Astrocyte of the cerebellum (primary cell): ENCODE measurements at regions of chr12 and their contacts with region 1.

Region 1: DNA sequence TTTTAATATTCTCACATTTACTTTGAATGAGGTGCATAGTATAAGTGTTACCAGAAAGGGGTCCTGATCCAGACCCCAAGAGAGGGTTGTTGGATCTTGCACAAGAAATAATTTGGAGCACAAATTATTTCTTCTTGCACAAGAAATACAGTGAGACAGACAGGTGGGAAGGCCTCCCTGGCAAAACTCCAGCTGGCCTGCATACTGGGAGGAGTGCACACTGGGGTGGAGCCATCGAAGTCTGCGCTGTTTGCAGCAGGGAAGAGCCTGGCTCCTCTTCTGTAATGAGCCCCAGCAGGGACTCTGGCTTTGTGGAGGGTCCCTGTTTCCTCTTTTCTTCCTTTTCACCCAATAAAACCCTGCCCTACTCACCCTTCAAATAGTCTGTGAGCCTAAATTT is 141.6 kb downstream of the GLT1D1 start:
- DNase-seq: no peak
- H3K4me3 ChIP-seq: no peak overlapping the region
- CTCF ChIP-seq: no peak

Region 2: DNA sequence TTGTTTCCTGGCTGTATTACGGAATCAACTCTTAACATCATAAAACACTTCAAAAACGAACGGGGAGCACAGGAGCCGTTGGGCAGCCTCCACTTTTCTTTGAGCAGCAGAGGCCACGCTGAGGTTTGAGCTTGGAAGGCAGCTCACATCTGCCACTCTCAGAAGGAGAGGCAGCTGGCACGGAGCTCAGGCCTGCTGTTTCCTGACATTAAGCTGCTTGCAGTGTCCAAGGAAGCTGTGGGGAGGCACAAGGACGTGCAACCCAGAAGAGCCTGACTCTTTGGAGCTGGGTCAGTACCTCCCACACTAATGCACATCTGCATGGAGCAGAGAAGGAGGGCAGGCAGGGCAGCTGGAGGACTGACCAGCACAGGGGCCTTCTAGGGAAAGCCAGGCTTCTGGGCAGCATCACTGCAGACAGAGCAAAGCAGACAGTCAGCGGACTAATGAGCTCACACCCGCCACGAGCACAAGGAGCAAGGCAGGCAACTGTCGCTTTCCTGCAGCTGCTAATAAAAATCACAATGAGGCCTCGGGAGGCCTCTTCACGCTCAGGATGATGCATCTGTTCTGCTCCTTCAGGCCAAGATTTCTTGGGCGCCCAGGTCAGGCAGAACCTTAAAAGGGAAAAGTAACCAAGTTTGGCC is 69.5 kb after region 1 on chr12:
- in situ Hi-C with region 1: no loop called
- DNase-seq: no peak
- H3K4me3 ChIP-seq: no peak overlapping the region
- CTCF ChIP-seq: no peak

Region 3: GRCh38 chr12:129075491-129076195 is 80.8 kb after region 1 on chr12:
- in situ Hi-C with region 1: loop called (anchors 5 kb)
- DNase-seq: no peak
- H3K4me3 ChIP-seq: no peak overlapping the region
- CTCF ChIP-seq: no peak